ENCODE measurements at regions of chr18 and their contacts with region 1.

Region 1: DNA sequence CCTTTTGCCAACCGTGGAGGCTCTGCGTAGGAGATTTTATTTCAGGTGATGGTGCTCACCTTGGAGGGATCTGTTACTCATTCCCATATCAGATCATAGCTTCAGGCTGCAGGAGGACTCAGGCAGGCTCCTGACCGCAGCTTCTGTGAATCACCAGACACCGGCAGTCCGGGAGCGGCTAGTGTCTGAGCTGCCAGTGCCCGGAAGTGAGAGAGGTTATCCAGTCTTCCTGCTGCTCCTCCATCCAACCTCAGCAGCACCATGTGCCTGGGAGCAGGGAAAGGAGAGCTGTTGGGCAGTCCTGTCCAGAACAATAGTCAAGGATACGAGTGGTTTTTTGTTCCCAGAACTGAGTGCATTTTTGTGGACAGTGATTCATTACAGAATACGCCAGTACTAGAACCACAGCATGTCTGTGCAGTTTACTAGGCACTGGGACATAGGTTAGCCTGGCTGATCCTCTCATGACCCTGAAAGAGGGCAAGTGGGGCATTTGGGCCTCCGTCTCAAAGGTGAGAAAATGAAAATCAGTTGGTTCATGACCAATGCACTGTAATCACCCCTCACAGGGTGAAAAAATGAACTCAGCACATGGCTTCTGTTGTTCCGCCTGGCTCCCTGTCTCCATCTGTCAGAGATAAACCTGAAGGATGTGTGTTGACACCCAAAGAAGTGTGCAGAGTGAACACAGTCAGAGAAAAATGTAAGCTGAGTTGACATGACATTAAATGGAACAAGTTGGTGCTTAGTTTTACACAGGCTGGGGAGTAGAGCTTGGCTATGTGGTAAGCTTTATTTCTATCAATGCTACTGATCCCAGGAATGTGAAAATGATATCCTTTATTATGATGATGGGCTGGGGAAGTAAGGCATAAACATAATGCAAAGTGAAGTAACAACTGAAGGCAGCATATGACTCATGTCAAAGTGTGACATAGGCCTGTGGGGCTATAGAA is 12.2 kb downstream of the FHOD3 start:
- DNase-seq: peak; percentile 54 to 73 (median 60)
- H3K4me3 ChIP-seq: no peak overlapping the region
- H3K27ac ChIP-seq: no peak overlapping the region
- H3K4me1 ChIP-seq: peaks cover 14% of the 10 kb centered on the region
- H3K27me3 ChIP-seq: no peaks in the 10 kb centered on the region
- CTCF ChIP-seq: no peak
- EP300 ChIP-seq: no peak
- POLR2A ChIP-seq: no peak

Region 2: GRCh38 chr18:36095936-36096519 is 213.7 kb before region 1 on chr18:
- intact Hi-C with region 1: no loop called
- DNase-seq: no peak
- H3K4me3 ChIP-seq: no peak overlapping the region
- H3K27ac ChIP-seq: no peak overlapping the region
- H3K4me1 ChIP-seq: no peaks in the 10 kb centered on the region
- H3K27me3 ChIP-seq: no peaks in the 10 kb centered on the region
- CTCF ChIP-seq: peak; percentile 39 to 69 (median 49)
- EP300 ChIP-seq: no peak
- POLR2A ChIP-seq: no peak

Region 3: GRCh38 chr18:36352384-36352783 is 42.7 kb after region 1 on chr18:
- intact Hi-C with region 1: loop called in 1 of 4 experiments (anchors 10 kb)
- DNase-seq: no peak
- H3K4me3 ChIP-seq: no peak overlapping the region
- H3K27ac ChIP-seq: no peak overlapping the region
- H3K4me1 ChIP-seq: no peaks in the 10 kb centered on the region
- H3K27me3 ChIP-seq: no peaks in the 10 kb centered on the region
- CTCF ChIP-seq: no peak
- EP300 ChIP-seq: no peak
- POLR2A ChIP-seq: no peak

Region 4: GRCh38 chr18:36464126-36464651 is 154.5 kb after region 1 on chr18:
- intact Hi-C with region 1: loop called in 1 of 4 experiments (anchors 10 kb)
- DNase-seq: no peak
- H3K4me3 ChIP-seq: no peak overlapping the region
- H3K27ac ChIP-seq: no peak overlapping the region
- H3K4me1 ChIP-seq: peaks cover 2% of the 10 kb centered on the region
- H3K27me3 ChIP-seq: no peaks in the 10 kb centered on the region
- CTCF ChIP-seq: no peak
- EP300 ChIP-seq: no peak
- POLR2A ChIP-seq: no peak